GM12878 (cell line): ENCODE measurements at regions of chr1 and their contacts with region 1.

Region 1: DNA sequence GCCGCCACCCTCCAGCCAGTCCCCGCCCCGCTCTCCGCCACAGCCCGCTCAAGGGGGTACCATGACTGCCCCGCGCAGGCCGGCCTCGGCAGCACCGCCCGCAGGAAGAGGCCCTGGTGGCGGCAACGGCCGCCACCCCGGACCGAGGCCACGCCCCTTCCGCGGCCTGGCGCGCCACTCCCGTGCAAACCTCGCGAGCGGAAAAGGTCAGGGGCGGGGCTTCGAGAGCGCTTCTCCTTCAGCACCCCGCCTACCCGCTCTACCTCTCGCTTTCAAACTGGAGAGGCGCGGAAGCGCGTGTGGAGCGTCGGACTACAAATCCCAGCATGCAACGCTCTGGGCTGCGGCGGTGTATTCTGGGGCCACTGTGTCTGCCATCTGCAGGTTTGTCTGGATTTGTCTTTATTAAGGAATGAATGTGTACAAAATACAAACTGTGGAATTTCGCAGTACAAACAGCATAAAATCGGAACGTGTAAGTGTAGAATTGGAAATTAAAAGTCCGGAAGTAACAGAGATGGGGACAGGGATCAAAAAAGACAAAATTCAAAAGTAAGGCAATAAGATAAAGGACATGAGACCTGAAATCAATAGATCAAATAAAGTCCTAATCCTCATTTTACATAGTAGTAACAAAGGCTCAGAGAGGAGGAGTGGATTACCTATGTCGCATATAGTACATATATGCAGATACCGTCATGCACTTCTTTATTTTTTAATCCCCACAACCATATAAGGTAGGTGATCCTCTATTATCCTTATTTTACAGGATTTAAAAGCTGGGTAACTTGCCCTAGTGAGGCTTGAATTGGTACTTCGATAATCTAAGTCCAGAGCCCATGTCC is 464 bp upstream of the ADSS2 start:
- DNase-seq: peak; percentile 93
- ATAC-seq: peak; percentile 96
- H3K4me3 ChIP-seq: peak overlapping the region; percentile 80
- H3K27ac ChIP-seq: no peak overlapping the region; the same call in 1 of the 2 replicates
- H3K4me1 ChIP-seq: peaks cover 4% of the 10 kb centered on the region; the same call in 1 of the 2 replicates
- H3K27me3 ChIP-seq: no peaks in the 10 kb centered on the region
- CTCF ChIP-seq: peak; percentile 42 to 54 (median 54); a peak in 4 of 6 replicates
- EP300 ChIP-seq: no peak
- POLR2A ChIP-seq: no peak
- RAD21 ChIP-seq: peak; percentile 53

Region 2: GRCh38 chr1:243727503-243728203 is 724.5 kb before region 1 on chr1:
- CTCF ChIA-PET with region 1: no interaction called
- POLR2A ChIA-PET with region 1: no interaction called
- RAD21 ChIA-PET with region 1: no interaction called
- SMC1A ChIA-PET with region 1: interaction called, 3 read pairs
- in situ Hi-C with region 1: no loop called
- intact Hi-C with region 1: loop called (anchors 10 kb)
- DNase-seq: peak; percentile 66
- ATAC-seq: peak; percentile 90
- H3K4me3 ChIP-seq: peak overlapping the region; percentile 29; the same call in 1 of the 2 replicates
- H3K27ac ChIP-seq: peak overlapping the region; percentile 74
- H3K4me1 ChIP-seq: peaks cover 42% of the 10 kb centered on the region
- H3K27me3 ChIP-seq: no peaks in the 10 kb centered on the region
- CTCF ChIP-seq: no peak
- EP300 ChIP-seq: peak; percentile 74 to 78; a peak in 3 of 4 replicates
- POLR2A ChIP-seq: no peak
- RAD21 ChIP-seq: no peak

Region 3: GRCh38 chr1:244296447-244296846 is 155.7 kb before region 1 on chr1:
- CTCF ChIA-PET with region 1: interaction called, 5 read pairs
- POLR2A ChIA-PET with region 1: interaction called, 5 read pairs
- RAD21 ChIA-PET with region 1: no interaction called
- SMC1A ChIA-PET with region 1: interaction called, 3 read pairs
- in situ Hi-C with region 1: no loop called
- intact Hi-C with region 1: loop called (anchors 5 kb)
- DNase-seq: no peak
- ATAC-seq: no peak
- H3K4me3 ChIP-seq: no peak overlapping the region
- H3K27ac ChIP-seq: no peak overlapping the region
- H3K4me1 ChIP-seq: peaks cover 3% of the 10 kb centered on the region
- H3K27me3 ChIP-seq: no peaks in the 10 kb centered on the region
- CTCF ChIP-seq: no peak
- EP300 ChIP-seq: no peak
- POLR2A ChIP-seq: no peak
- RAD21 ChIP-seq: no peak

Region 4: GRCh38 chr1:244513493-244513892 is 61.3 kb after region 1 on chr1:
- CTCF ChIA-PET with region 1: no interaction called
- POLR2A ChIA-PET with region 1: no interaction called
- RAD21 ChIA-PET with region 1: no interaction called
- SMC1A ChIA-PET with region 1: no interaction called
- in situ Hi-C with region 1: no loop called
- intact Hi-C with region 1: no loop called
- DNase-seq: no peak
- ATAC-seq: no peak
- H3K4me3 ChIP-seq: no peak overlapping the region
- H3K27ac ChIP-seq: no peak overlapping the region
- H3K4me1 ChIP-seq: no peaks in the 10 kb centered on the region
- H3K27me3 ChIP-seq: no peaks in the 10 kb centered on the region
- CTCF ChIP-seq: no peak
- EP300 ChIP-seq: no peak
- POLR2A ChIP-seq: no peak
- RAD21 ChIP-seq: no peak

Region 5: GRCh38 chr1:244536316-244536715 is 84.1 kb after region 1 on chr1:
- CTCF ChIA-PET with region 1: no interaction called
- POLR2A ChIA-PET with region 1: no interaction called
- RAD21 ChIA-PET with region 1: no interaction called
- SMC1A ChIA-PET with region 1: no interaction called
- in situ Hi-C with region 1: no loop called
- intact Hi-C with region 1: no loop called
- DNase-seq: no peak
- ATAC-seq: peak; percentile 61
- H3K4me3 ChIP-seq: no peak overlapping the region
- H3K27ac ChIP-seq: no peak overlapping the region
- H3K4me1 ChIP-seq: no peaks in the 10 kb centered on the region
- H3K27me3 ChIP-seq: no peaks in the 10 kb centered on the region
- CTCF ChIP-seq: no peak
- EP300 ChIP-seq: no peak
- POLR2A ChIP-seq: no peak
- RAD21 ChIP-seq: no peak

Region 6: GRCh38 chr1:244652699-244653466 is 200.7 kb after region 1 on chr1 and contains the start of gene DESI2:
- CTCF ChIA-PET with region 1: no interaction called
- POLR2A ChIA-PET with region 1: interaction called, 4 read pairs
- RAD21 ChIA-PET with region 1: no interaction called
- SMC1A ChIA-PET with region 1: no interaction called
- in situ Hi-C with region 1: loop called (anchors 5 kb)
- intact Hi-C with region 1: loop called (anchors 2 kb)
- DNase-seq: peak; percentile 96
- ATAC-seq: peak; percentile 95
- H3K4me3 ChIP-seq: peak within 1 kb of the TSS; percentile 91
- H3K27ac ChIP-seq: peak within 1 kb of the TSS; percentile 71
- H3K4me1 ChIP-seq: no peaks in the 10 kb centered on the region
- H3K27me3 ChIP-seq: no peaks in the 10 kb centered on the region; a peak in 1 of 4 replicates
- CTCF ChIP-seq: peak; percentile 40 to 51 (median 46); a peak in 5 of 6 replicates
- EP300 ChIP-seq: 0 out of 4 replicates have a peak, but pooled peaks of 1 of the 2 experiments have one; percentile 2
- POLR2A ChIP-seq: peak; percentile 96
- RAD21 ChIP-seq: no peak
- polyA plus RNA-seq, gene DESI2: 6.2 to 7.0 TPM

Region 7: GRCh38 chr1:244970661-244971551 is 518.7 kb after region 1 on chr1:
- CTCF ChIA-PET with region 1: interaction called, 4 read pairs
- POLR2A ChIA-PET with region 1: no interaction called
- RAD21 ChIA-PET with region 1: no interaction called
- SMC1A ChIA-PET with region 1: interaction called, 3 read pairs
- in situ Hi-C with region 1: loop called (anchors 10 kb)
- intact Hi-C with region 1: no loop called
- DNase-seq: peak; percentile 74
- ATAC-seq: peak; percentile 84
- H3K4me3 ChIP-seq: peak overlapping the region; percentile 58
- H3K27ac ChIP-seq: peak overlapping the region; percentile 98
- H3K4me1 ChIP-seq: no peaks in the 10 kb centered on the region
- H3K27me3 ChIP-seq: no peaks in the 10 kb centered on the region
- CTCF ChIP-seq: peak; percentile 48 to 61 (median 53)
- EP300 ChIP-seq: no peak
- POLR2A ChIP-seq: peak; percentile 90
- RAD21 ChIP-seq: peak; percentile 24; the same call in 1 of the 2 replicates